Caco-2 (cell line): ENCODE measurements at regions of chr7 and their contacts with region 1.

Region 1: DNA sequence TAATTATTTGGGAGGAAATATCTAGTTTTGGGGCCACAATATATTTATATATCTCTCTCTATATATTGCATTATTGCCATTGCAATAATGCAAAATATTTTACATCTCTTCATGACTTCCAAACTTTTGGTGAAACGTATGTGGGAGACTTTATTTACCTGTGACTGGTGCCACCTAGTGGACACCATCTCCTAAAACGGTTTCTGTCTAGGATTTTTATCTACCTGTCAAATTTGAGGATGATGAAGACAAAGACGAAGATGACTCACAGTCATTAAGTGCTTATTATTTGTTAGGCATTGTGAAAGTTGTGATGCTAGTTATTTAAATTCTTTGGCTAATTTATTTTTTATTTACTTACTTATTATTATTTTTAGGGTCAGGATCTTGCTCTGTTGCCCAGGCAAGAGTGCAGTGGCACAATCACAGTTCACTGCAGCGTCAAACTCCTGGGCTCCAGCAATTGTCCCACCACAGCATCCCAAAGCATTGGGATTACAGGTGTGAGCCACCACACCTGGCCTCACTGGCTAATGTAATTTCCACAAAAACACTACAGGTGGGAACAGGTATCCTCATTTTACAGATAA is 18.7 kb upstream of the CBLL1 start:
- DNase-seq: peak in 1 of 2 experiments; percentile 60
- H3K4me3 ChIP-seq: no peak overlapping the region
- H3K4me3 Mint-ChIP-seq: no peak overlapping the region
- H3K27ac Mint-ChIP-seq: no peak overlapping the region
- H3K4me1 ChIP-seq: 0 out of 2 replicates have a peak, but pooled peaks cover 4% of the 10 kb centered on the region
- H3K4me1 Mint-ChIP-seq: peaks cover 5% of the 10 kb centered on the region
- H3K27me3 ChIP-seq: no peaks in the 10 kb centered on the region
- H3K27me3 Mint-ChIP-seq: peaks cover 14% of the 10 kb centered on the region
- CTCF ChIP-seq: peak; percentile 60 to 66

Region 2: DNA sequence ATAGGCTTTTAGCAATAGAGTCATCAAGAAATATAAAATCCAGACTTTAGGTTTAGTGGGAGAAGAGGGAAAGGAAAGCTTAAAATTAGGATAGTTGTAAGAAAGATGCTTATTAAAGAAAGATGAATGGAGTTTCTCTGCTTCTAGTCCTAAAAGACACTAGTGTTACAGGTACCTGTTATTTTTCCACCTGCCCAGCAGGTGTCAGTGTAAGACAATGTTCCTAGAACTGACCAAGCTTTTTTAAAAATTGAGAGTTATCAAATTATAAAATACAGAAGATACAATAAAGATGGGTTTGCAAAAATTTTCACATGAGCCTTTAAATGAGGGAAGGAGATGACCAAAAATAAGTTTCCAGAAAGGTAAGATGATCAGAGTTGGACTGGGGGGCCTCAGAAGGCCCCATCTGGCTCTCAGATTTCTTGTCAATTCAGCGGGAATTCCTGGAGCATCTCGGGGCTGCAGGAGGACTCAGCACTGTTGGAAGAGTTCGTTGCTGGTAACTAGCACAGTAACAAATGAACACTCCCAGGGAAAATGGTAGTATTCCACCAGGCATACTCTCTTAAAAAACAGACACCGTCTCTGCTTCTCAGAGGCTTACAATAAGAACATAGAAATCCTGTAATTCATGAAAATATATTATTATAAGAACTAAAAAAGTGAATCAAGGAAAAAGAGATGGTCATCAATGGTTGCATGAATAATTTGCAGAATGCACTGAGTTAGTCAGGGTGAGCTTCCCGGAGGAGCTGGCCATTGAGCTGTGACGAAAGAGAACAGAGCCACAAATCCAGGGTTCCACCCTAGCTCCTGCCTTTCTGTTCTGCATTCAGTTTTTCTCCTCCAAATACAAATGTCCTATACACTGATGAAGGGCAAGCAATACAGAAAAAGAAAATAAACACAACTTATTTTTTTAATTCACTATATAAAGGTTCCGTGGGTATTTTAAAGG is 932.0 kb before region 1 on chr7:
- CTCF ChIA-PET with region 1: no interaction called
- POLR2A ChIA-PET with region 1: no interaction called
- intact Hi-C with region 1: loop called (anchors 5 kb)
- DNase-seq: peak in 1 of 2 experiments; percentile 43
- H3K4me3 ChIP-seq: no peak overlapping the region
- H3K4me3 Mint-ChIP-seq: no peak overlapping the region
- H3K27ac Mint-ChIP-seq: no peak overlapping the region
- H3K4me1 ChIP-seq: no peaks in the 10 kb centered on the region
- H3K4me1 Mint-ChIP-seq: no peaks in the 10 kb centered on the region
- H3K27me3 ChIP-seq: no peaks in the 10 kb centered on the region; the same call in 1 of the 2 replicates
- H3K27me3 Mint-ChIP-seq: peaks cover 12% of the 10 kb centered on the region
- CTCF ChIP-seq: peak; percentile 68 to 75

Region 3: DNA sequence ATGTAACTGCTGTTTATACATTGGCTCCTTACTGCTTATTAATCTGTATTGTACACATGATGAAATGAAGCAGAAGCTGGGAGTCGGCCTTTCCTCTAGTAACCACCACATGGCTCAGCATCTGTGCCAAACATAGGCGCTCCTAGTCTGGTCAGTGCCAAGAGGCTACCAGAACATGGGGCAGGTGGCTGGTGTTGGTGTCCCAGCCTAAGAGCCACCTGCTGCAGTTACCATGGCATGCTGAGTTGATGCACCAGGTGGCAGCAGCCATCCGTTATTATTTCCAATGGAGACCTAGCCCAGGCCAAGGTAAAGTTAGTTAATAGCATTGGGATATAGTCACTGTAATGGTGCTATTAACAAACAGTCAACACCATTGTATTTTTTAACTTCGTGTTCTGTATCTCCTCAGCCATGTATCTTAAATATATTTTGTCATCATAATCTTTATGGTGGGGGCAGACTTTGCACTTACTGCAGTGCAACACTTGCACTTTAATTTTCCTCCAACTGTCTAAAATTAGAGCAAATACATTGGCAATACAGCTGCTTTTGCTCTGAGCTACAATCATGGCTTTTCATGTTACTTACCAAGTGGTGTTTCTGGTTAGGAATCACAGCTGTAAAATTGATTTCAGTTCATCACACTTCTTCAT is 523.3 kb before region 1 on chr7:
- CTCF ChIA-PET with region 1: no interaction called
- POLR2A ChIA-PET with region 1: no interaction called
- intact Hi-C with region 1: loop called (anchors 2 kb)
- DNase-seq: peak; percentile 46 to 53
- H3K4me3 ChIP-seq: no peak overlapping the region
- H3K4me3 Mint-ChIP-seq: no peak overlapping the region
- H3K27ac Mint-ChIP-seq: no peak overlapping the region
- H3K4me1 ChIP-seq: no peaks in the 10 kb centered on the region
- H3K4me1 Mint-ChIP-seq: peaks cover 11% of the 10 kb centered on the region
- H3K27me3 ChIP-seq: no peaks in the 10 kb centered on the region
- H3K27me3 Mint-ChIP-seq: no peaks in the 10 kb centered on the region
- CTCF ChIP-seq: peak; percentile 39 to 66

Region 4: GRCh38 chr7:107563775-107564552 is 161.3 kb before region 1 on chr7 and contains the starts of genes COG5 and DUS4L:
- CTCF ChIA-PET with region 1: no interaction called
- POLR2A ChIA-PET with region 1: no interaction called
- intact Hi-C with region 1: loop called (anchors 1 kb)
- DNase-seq: peak; percentile 84 to 88
- H3K4me3 ChIP-seq: peak within 1 kb of the TSS; percentile 85
- H3K4me3 Mint-ChIP-seq: peak within 1 kb of the TSS; percentile 94
- H3K27ac Mint-ChIP-seq: peak within 1 kb of the TSS; percentile 95
- H3K4me1 ChIP-seq: peaks cover 8% of the 10 kb centered on the region
- H3K4me1 Mint-ChIP-seq: peaks cover 43% of the 10 kb centered on the region
- H3K27me3 ChIP-seq: no peaks in the 10 kb centered on the region
- H3K27me3 Mint-ChIP-seq: no peaks in the 10 kb centered on the region
- CTCF ChIP-seq: no peak
- total RNA-seq, gene COG5: 43.9 and 45.5 TPM in 2 replicates
- total RNA-seq, gene DUS4L: 17.5 and 19.3 TPM in 2 replicates

Region 5: DNA sequence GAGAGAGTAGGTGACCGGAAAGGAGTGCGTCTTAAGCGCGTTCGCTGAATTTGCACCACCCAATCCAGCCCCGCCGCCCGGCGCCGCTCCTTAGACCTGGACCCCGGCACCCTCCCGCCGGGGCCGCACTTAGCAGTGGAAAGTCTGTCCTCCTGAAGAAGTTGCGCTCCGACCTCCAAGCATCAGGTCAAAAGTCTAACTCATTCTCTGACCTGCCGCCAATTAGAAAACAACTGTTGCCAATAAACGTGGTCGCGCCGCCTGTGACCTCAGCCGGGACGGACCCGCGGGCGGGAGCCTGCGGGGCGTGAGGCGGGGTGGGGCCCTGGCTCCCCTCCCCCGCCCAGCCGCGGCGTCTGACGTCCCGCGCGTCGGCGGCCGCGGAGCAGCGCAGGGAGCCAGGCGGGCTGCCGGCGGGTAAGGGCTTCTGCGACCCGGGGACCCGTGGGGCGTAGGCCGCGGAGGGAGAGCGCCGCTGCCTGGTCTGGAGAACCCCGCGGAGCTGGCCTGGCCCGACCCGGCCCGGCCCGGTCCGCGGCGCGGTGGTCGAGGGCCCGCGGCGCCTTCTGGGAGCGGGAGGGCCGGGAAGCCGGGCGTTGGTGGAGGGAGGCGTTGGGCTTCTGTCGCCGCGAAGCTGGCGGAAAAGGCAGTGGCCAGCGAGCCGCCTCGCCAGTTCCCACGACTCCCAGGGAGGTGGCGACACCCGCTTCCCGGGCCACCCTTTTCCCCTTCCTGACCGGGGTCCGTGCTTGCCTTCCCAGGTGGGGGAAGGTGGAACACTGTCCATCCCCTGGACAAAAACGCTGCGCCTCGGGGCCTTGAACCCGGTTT is 145.1 kb before region 1 on chr7 and contains the start of gene BCAP29:
- CTCF ChIA-PET with region 1: no interaction called
- POLR2A ChIA-PET with region 1: no interaction called
- intact Hi-C with region 1: loop called (anchors 1 kb)
- DNase-seq: peak; percentile 88 to 91
- H3K4me3 ChIP-seq: peak within 1 kb of the TSS; percentile 79
- H3K4me3 Mint-ChIP-seq: peak within 1 kb of the TSS; percentile 90
- H3K27ac Mint-ChIP-seq: peak within 1 kb of the TSS; percentile 94
- H3K4me1 ChIP-seq: peaks cover 9% of the 10 kb centered on the region
- H3K4me1 Mint-ChIP-seq: peaks cover 7% of the 10 kb centered on the region
- H3K27me3 ChIP-seq: no peaks in the 10 kb centered on the region
- H3K27me3 Mint-ChIP-seq: no peaks in the 10 kb centered on the region
- CTCF ChIP-seq: peak; percentile 14 to 55
- total RNA-seq, gene BCAP29: 30.4 and 35.3 TPM in 2 replicates

Region 6: GRCh38 chr7:107758667-107759066 is 33.4 kb after region 1 on chr7:
- CTCF ChIA-PET with region 1: no interaction called
- POLR2A ChIA-PET with region 1: no interaction called
- intact Hi-C with region 1: no loop called
- DNase-seq: no peak
- H3K4me3 ChIP-seq: no peak overlapping the region
- H3K4me3 Mint-ChIP-seq: no peak overlapping the region
- H3K27ac Mint-ChIP-seq: no peak overlapping the region
- H3K4me1 ChIP-seq: peaks cover 2% of the 10 kb centered on the region
- H3K4me1 Mint-ChIP-seq: no peaks in the 10 kb centered on the region
- H3K27me3 ChIP-seq: no peaks in the 10 kb centered on the region
- H3K27me3 Mint-ChIP-seq: no peaks in the 10 kb centered on the region
- CTCF ChIP-seq: no peak